Mammary epithelial cell (primary cell): ENCODE measurements at regions of chr15 and their contacts with region 1.

Region 1: DNA sequence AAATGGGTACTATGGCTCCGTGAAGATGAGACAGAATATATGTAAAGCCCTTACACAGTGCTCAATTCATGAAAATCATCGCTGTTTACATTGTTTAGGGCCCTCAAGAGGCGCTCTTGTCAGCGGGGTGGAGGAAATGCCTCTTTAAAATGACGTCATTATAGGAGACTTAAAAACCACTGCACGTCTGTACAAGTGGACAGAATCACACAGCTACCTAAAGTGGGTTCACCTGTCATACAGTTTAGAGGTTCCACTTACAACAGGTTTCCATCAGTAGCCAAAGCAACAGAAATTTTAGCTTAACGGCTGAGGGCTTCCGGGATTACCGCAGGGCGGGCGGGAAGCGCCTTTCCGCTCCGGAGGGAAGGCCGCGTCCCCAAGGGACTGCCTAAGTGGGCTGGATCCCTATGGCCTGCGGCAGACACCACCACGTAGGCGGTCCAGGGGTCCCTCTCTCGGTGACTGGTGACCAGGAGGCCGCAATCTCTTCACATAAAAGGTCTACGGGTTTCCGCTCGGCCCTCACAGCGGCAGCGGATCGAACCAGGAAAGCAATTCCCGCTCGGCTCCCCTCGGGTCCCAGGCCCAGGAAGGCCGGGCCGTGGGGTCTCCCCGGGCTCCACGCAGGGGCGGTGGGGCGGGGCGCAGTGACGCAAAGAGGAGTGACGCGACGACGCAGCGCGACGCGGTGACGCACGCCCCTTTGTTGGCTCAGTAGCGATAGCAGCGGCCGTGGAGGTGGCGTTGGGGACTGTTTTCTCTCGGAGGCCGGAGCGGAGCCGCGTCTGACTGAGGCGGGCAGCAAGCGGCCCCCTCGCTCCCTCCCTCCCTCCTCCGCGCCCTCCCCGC is at the start of gene ARIH1:
- DNase-seq: peak; percentile 94
- H3K4me3 ChIP-seq: peak within 1 kb of the TSS; percentile 60 to 99 (median 77)
- H3K27ac ChIP-seq: peak within 1 kb of the TSS; percentile 97
- H3K4me1 ChIP-seq: peaks cover 13% of the 10 kb centered on the region
- H3K27me3 ChIP-seq: no peaks in the 10 kb centered on the region
- CTCF ChIP-seq: peak; percentile 37 to 55
- total RNA-seq, gene ARIH1: 51.0 to 178 TPM

Region 2: DNA sequence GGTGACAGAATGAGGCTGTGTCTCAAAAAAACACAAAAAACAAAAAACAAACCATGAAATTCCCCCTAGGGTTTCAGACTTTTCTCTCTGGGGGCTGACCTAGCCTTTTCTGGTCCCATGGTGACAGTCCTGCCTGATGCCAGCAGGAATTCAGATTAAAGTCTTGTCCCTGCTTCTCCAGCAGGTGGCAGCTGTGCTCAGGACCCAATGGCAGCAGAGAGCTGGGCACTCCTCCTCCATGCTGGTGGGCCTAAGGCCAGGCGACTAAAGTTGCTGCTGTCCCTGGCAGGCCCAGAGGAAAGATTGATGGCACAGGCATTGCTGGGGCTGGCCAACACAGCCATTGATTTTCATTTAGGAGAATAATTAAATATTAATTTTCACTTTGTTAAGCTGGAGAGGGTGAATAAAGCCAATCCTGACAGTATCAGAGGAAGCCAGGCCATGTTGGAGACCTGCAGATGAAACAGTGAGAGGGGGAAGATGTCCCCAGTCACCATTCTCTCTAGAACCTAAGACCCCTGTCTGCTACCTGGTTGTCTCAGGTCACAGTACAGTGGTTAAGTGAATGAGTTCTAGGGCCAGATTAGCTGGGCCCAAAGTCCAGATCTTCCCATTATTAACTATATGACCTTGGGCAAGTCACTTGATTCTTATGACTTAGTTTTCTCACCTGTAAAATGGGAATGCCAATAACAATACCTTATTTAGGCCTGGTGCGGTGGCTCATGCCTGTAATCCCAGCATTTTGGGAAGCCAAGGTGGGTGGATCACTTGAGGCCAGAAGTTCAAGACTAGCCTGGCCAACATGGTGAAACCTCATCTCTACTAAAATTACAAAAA is 161.0 kb before region 1 on chr15:
- CTCF ChIA-PET with region 1: no interaction called
- dilution Hi-C with region 1: no loop called
- in situ Hi-C with region 1: no loop called
- intact Hi-C with region 1: loop called (anchors 10 kb)
- DNase-seq: peak; percentile 36
- H3K4me3 ChIP-seq: no peak overlapping the region
- H3K27ac ChIP-seq: no peak overlapping the region
- H3K4me1 ChIP-seq: no peaks in the 10 kb centered on the region
- H3K27me3 ChIP-seq: no peaks in the 10 kb centered on the region
- CTCF ChIP-seq: peak; percentile 72 to 85

Region 3: DNA sequence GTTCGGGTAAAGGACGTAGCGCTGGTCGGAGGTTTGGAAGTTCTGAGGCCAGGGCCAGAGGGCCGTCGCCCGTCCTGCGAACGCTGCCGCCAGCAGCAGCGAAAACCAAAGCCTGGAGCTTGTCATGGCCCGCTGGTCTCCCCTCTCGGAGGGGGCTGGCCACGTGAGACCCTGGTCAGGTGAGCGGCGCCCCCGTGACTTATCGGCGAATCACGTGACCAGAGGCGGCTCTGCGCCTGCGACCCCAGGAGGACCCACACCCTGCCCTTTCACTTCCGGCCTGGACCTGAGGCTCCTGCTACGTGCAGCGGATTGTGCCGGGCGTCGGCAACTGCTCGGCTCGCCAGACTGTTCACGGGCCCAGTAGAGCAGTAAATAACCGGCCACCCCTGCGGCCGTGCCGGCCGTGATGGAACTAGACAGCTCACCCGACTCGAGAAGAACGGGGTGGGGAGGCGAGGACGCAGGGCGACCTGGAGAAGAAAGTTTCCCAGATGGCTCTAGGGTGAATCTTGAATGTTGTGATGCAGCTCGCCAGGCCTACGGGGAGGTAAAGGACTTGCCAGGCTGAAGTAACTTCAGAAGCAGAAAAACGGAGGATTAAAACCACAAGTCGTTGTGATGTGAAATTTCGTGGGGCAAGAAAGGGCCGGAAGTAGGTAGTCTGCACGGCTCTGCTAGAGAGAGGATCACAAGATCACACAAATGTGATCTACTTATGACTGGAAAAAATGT is 97.8 kb before region 1 on chr15 and contains the start of gene HEXA:
- CTCF ChIA-PET with region 1: no interaction called
- dilution Hi-C with region 1: no loop called
- in situ Hi-C with region 1: no loop called
- intact Hi-C with region 1: loop called (anchors 5 kb)
- DNase-seq: peak; percentile 84
- H3K4me3 ChIP-seq: peak within 1 kb of the TSS; percentile 69 to 77 (median 76)
- H3K27ac ChIP-seq: peak within 1 kb of the TSS; percentile 76
- H3K4me1 ChIP-seq: peaks cover 14% of the 10 kb centered on the region
- H3K27me3 ChIP-seq: no peaks in the 10 kb centered on the region
- CTCF ChIP-seq: no peak
- total RNA-seq, gene HEXA: 74.7 to 76.2 TPM

Region 4: GRCh38 chr15:72532991-72533601 is 59.3 kb after region 1 on chr15:
- CTCF ChIA-PET with region 1: no interaction called
- dilution Hi-C with region 1: no loop called
- in situ Hi-C with region 1: no loop called
- intact Hi-C with region 1: loop called (anchors 5 kb)
- DNase-seq: no peak
- H3K4me3 ChIP-seq: no peak overlapping the region
- H3K27ac ChIP-seq: no peak overlapping the region
- H3K4me1 ChIP-seq: no peaks in the 10 kb centered on the region
- H3K27me3 ChIP-seq: no peaks in the 10 kb centered on the region
- CTCF ChIP-seq: peak in 1 of 2 donors; percentile 49

Region 5: DNA sequence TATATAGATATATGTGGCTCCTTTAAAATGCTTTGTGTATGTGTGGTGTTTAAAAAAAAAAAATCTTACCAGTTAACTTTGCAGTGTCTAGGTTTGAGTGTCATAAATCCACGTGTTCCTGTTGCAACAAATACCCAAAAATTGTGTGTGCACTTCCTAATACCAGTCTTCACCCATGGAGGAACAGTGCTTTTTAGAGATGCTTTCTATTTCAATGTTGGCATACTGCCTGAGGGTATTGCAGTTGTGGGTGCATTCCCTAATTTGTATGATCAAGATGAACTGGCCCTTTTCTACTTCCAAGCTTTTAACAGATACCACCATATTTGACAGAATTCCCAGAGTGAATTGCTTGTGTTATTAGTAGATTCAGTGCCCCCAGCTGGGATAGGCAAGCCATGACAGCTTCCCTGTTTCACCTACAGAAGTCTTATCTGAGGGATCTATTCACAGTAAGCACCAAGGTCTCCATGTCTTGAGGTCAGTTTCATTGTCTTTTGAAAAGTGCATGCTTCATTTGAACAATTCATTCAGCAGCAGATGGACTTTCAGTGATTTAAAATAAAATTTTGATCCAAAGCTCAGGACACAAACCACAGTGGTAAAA is 111.7 kb after region 1 on chr15:
- CTCF ChIA-PET with region 1: no interaction called
- dilution Hi-C with region 1: no loop called
- in situ Hi-C with region 1: no loop called
- intact Hi-C with region 1: loop called (anchors 5 kb)
- DNase-seq: peak; percentile 8
- H3K4me3 ChIP-seq: no peak overlapping the region
- H3K27ac ChIP-seq: no peak overlapping the region
- H3K4me1 ChIP-seq: no peaks in the 10 kb centered on the region
- H3K27me3 ChIP-seq: no peaks in the 10 kb centered on the region
- CTCF ChIP-seq: peak; percentile 5 to 40